Heart right ventricle (tissue), 16 donors: ENCODE measurements at regions of chr3 and their contacts with region 1.

Region 1: GRCh38 chr3:41881233-41881821 is 80.6 kb downstream of the ULK4 start:
- DNase-seq: peak in 1 of 2 donors; percentile 23
- ATAC-seq: no peak
- H3K4me3 ChIP-seq: no peak overlapping the region
- H3K27ac ChIP-seq: no peak overlapping the region
- H3K4me1 ChIP-seq: no peaks in the 10 kb centered on the region
- H3K27me3 ChIP-seq: no peaks in the 10 kb centered on the region
- CTCF ChIP-seq: peak; percentile 47 to 81 (median 76)

Region 2: DNA sequence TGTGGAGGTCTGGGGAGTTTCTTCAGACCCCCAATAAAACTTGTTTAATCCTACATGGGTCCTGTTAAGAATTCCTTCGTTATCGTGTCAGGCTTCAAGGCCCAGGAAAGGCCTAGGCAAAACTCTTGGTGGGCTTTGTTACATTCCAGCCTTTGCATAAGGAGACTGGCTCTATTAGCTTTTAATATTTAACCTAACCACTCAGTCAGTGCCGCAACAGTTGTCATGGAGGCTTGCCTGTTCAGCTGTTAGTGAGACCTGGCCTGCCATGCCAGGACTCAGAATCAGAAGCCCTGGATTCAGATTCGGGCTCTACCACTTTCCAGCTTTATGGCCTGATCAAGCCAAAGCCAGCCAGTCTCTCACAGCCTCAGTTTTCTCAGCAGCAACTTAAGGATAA is 1552.3 kb before region 1 on chr3:
- intact Hi-C with region 1: loop called (anchors 2 to 10 kb)
- DNase-seq: no peak
- ATAC-seq: no peak
- H3K4me3 ChIP-seq: no peak overlapping the region
- H3K27ac ChIP-seq: no peak overlapping the region
- H3K4me1 ChIP-seq: peaks cover 0 to 13% (median 3%) of the 10 kb centered on the region in 9 donors
- H3K27me3 ChIP-seq: no peaks in the 10 kb centered on the region
- CTCF ChIP-seq: no peak

Region 3: GRCh38 chr3:41362638-41363559 is 518.4 kb before region 1 on chr3:
- intact Hi-C with region 1: no loop called
- DNase-seq: no peak
- ATAC-seq: peak in 5 of 8 donors; percentile 16 to 67 (median 24)
- H3K4me3 ChIP-seq: no peak overlapping the region
- H3K27ac ChIP-seq: no peak overlapping the region
- H3K4me1 ChIP-seq: peaks cover 0 to 12% (median 0%) of the 10 kb centered on the region in 9 donors
- H3K27me3 ChIP-seq: no peaks in the 10 kb centered on the region
- CTCF ChIP-seq: no peak